Sigmoid colon (tissue), 7 donors: ENCODE measurements at regions of chr10 and their contacts with region 1.

Region 1: DNA sequence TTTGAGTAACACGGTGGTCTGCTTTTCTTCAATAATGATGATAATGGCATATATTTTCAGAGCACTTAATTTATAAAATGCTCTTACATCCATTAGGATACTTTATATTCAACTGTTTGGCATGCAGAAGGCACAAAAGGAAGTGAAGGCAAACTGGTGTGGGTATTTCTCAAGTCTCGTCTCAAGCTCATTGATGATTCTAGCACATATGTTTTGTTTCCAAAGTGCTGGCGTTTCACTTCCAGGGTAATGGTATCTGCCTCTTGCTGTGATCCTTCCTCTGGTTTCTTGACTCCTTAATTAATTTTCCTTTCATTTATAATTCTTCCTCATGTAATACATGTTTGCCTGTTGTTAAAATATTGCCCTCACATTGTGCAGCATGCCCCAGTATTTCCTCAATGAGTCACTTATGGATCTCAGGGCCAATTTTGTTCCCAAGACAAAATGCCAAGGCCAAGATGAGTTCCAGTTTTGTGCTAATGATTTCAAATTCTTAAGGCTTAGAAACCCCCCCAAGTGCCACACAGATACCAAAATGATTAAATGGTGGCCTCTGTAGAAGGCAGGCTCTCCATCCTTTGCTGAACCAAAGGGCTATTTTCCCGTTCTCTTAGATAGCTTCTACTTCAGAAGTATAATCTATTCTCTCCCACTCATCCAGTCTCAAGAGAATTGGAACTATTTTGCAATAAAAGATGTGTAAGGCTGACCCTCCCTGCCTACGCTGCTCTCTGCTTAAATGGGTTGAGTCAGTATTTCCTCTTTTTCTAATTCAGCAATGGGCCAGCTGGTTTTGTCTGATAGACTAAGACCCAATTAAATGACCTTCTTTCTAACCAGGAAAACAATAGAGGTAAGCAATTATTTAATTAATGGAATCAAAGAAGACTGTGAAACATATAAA is 171.2 kb downstream of the ZNF365 start:
- DNase-seq: peak; percentile 71
- H3K4me3 ChIP-seq: no peak overlapping the region
- H3K27ac ChIP-seq: peak overlapping the region in 3 of 4 donors; percentile 17 to 58 (median 43)
- H3K4me1 ChIP-seq: no peaks in the 10 kb centered on the region
- H3K27me3 ChIP-seq: no peaks in the 10 kb centered on the region
- CTCF ChIP-seq: no peak
- EP300 ChIP-seq: no peak
- POLR2A ChIP-seq: no peak

Region 2: DNA sequence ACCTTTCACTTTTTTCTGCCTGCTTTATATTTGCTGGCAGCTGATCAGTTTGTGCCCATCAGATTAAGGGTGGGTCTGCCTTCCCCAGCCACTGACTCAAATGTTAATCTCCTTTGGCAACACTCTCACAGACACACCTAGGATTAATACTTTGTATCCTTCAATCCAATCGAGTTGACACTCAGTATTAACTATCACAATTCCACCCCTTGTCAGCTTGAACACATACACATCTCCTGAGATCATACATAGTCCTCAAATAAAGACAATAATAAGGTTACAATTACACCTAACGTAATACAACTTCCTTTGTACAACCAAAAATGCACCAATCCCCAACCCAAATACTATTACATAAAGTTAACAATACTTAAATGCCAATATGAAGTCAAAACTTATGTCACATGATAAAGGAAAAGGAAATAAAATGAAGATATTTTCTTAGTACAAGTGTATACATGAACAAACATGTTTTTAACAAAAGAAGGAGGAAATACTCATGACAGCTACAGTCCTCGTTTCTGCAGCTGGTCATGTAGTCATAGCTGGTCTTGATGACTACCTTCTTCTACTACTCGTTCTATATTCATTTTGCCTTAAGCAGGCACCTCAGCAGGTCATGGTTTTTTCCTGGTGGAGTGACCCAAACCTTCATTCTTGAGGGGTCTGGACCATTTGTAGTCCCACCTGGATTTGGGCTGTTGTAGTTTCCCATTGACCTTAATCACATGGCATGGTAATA is 979.4 kb before region 1 on chr10:
- intact Hi-C with region 1: loop called (anchors 10 kb)
- DNase-seq: no peak
- H3K4me3 ChIP-seq: no peak overlapping the region
- H3K27ac ChIP-seq: no peak overlapping the region
- H3K4me1 ChIP-seq: no peaks in the 10 kb centered on the region
- H3K27me3 ChIP-seq: no peaks in the 10 kb centered on the region
- CTCF ChIP-seq: no peak
- EP300 ChIP-seq: no peak
- POLR2A ChIP-seq: no peak

Region 3: GRCh38 chr10:62492012-62492869 is 53.2 kb before region 1 on chr10:
- intact Hi-C with region 1: no loop called
- DNase-seq: no peak
- H3K4me3 ChIP-seq: no peak overlapping the region
- H3K27ac ChIP-seq: no peak overlapping the region
- H3K4me1 ChIP-seq: no peaks in the 10 kb centered on the region
- H3K27me3 ChIP-seq: no peaks in the 10 kb centered on the region
- CTCF ChIP-seq: no peak
- EP300 ChIP-seq: no peak
- POLR2A ChIP-seq: no peak

Region 4: GRCh38 chr10:62583876-62584615 is 38.6 kb after region 1 on chr10:
- intact Hi-C with region 1: no loop called
- DNase-seq: no peak
- H3K4me3 ChIP-seq: no peak overlapping the region
- H3K27ac ChIP-seq: peak overlapping the region in 2 of 4 donors; percentile 42 to 62
- H3K4me1 ChIP-seq: peaks cover 0 to 10% (median 5%) of the 10 kb centered on the region in 4 donors
- H3K27me3 ChIP-seq: no peaks in the 10 kb centered on the region
- CTCF ChIP-seq: no peak
- EP300 ChIP-seq: no peak
- POLR2A ChIP-seq: no peak

Region 5: DNA sequence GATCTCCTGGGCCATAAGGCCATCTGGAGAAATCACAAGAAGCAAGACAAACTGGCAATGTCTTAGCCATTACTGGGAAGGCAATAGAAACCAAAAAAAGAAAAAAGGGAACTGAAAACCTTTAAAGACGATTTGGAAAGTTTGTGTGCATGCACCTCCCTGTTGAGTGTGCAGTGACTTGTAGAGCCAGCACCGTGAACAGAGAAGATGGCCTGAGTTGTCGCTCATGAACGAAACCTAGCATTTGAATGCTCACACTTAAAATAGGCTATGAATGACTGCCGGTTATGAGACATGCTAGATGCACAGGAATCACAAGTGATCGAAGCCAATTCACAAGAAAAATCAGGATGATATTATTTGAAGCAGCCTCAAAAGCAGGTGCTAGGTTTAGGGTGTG is 107.8 kb after region 1 on chr10:
- intact Hi-C with region 1: no loop called
- DNase-seq: no peak
- H3K4me3 ChIP-seq: no peak overlapping the region
- H3K27ac ChIP-seq: no peak overlapping the region
- H3K4me1 ChIP-seq: peaks cover 0 to 8% (median 0%) of the 10 kb centered on the region in 4 donors
- H3K27me3 ChIP-seq: no peaks in the 10 kb centered on the region
- CTCF ChIP-seq: no peak
- EP300 ChIP-seq: no peak
- POLR2A ChIP-seq: no peak